Heart right ventricle (tissue), 16 donors: ENCODE measurements at regions of chr11 and their contacts with region 1.

Region 1: GRCh38 chr11:30855383-30856006 is 269.3 kb upstream of the MPPED2 start:
- DNase-seq: no peak
- ATAC-seq: peak in 1 of 8 donors; percentile 55
- H3K4me3 ChIP-seq: no peak overlapping the region
- H3K27ac ChIP-seq: no peak overlapping the region
- H3K4me1 ChIP-seq: peaks cover 0 to 4% (median 0%) of the 10 kb centered on the region in 9 donors
- H3K27me3 ChIP-seq: no peaks in the 10 kb centered on the region
- CTCF ChIP-seq: peak in 8 of 9 donors; percentile 33 to 77 (median 62)

Region 2: DNA sequence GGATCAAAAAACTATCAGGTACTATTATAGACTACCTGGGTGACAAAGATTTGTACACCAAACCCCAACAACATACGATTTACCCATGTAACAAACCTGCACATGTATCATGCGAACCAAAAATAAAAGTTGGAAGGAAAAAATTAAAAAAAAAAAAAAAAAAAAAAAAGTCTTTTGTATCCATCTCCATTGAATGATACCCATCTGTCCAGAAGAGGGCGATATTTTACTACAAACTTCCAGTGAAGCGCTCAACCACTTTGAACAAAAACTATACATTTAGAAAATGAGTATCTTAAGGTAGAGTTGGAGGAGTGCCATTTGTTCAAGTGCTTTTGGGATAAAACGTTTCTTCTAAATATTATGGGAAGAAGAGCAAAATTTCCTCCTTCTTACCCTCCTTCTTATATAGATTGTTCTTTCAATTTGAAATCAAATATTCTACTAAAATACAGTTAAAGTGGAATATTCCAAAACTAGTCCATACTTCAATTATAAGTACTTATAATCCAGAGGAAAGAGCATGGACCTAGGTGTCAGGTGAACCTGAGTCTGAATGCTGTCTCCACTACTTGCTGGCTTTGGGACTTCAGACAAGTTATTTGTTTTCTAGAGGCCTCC is 509.3 kb before region 1 on chr11:
- intact Hi-C with region 1: loop called in 9 of 10 experiments (anchors 1 to 5 kb)
- DNase-seq: peak in 1 of 2 donors; percentile 19
- ATAC-seq: peak in 5 of 8 donors; percentile 25 to 64 (median 62)
- H3K4me3 ChIP-seq: peak overlapping the region in 1 of 10 donors; percentile 13
- H3K27ac ChIP-seq: no peak overlapping the region
- H3K4me1 ChIP-seq: peaks cover 0 to 4% (median 0%) of the 10 kb centered on the region in 9 donors
- H3K27me3 ChIP-seq: no peaks in the 10 kb centered on the region
- CTCF ChIP-seq: peak; percentile 48 to 83 (median 67)

Region 3: DNA sequence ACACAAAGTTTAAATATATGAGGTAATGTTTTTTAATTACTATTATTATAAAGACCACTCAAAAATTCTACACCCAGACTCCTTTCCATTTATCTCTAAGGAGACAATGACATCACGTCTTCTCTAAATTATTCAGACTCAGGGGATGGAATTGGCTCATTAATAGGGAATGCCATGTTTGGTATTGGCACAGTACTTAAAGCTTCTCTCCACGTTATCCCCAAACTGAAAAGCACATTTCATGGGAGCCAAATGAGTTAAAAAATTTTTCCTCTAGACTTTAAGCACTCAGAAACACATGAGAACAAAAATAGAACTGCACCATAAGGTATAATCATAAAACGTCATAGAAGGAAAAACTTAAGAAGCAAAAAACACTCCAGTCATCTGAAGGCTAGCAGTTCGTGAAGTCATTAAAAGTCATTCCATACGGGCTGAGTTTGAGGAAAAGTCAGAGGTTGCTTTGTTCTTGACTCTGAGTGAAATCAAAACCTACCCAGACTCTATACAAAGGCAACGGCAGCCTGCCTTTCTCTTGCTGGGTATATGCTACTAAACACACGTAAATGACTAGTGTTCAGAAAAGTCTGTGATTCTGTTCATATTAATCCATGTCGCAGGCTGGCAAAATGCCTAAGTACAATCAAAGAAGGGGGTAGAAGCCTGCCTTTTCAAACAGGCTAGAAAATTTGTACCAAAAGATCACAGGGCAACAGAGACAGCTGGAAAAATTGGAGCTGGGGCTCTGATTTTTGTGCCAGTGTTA is 260.7 kb before region 1 on chr11:
- intact Hi-C with region 1: loop called in 1 of 10 experiments (anchors 10 kb)
- DNase-seq: no peak
- ATAC-seq: no peak
- H3K4me3 ChIP-seq: peak overlapping the region in 2 of 10 donors; percentile 8
- H3K27ac ChIP-seq: no peak overlapping the region
- H3K4me1 ChIP-seq: peaks cover 0 to 6% (median 0%) of the 10 kb centered on the region in 9 donors
- H3K27me3 ChIP-seq: no peaks in the 10 kb centered on the region
- CTCF ChIP-seq: no peak

Region 4: DNA sequence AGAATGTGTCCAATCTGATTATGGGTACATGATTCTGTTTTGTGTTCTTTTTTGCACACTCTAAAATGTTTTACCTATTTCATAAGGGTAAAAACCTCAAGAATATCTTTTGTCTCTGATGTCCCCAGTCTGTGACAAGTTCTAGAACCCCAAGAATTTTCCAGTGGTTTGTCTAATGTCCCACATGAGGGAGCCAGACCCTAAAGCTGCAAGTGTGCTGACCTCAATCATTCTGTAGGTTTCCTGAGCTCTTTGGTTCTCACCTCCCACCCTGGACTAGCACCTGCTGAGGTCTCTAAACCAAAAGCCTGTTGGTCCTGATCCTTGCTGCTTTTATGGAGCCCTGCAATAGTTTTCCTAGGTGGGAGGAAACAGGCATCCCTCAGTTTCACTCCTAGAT is 119.5 kb before region 1 on chr11:
- intact Hi-C with region 1: loop called in 1 of 10 experiments (anchors 5 kb)
- DNase-seq: no peak
- ATAC-seq: no peak
- H3K4me3 ChIP-seq: no peak overlapping the region
- H3K27ac ChIP-seq: no peak overlapping the region
- H3K4me1 ChIP-seq: no peaks in the 10 kb centered on the region
- H3K27me3 ChIP-seq: peaks cover 0 to 6% (median 0%) of the 10 kb centered on the region in 7 donors
- CTCF ChIP-seq: peak in 4 of 9 donors; percentile 8 to 37 (median 24)

Region 5: GRCh38 chr11:30889143-30889794 is 33.8 kb after region 1 on chr11:
- intact Hi-C with region 1: no loop called
- DNase-seq: no peak
- ATAC-seq: no peak
- H3K4me3 ChIP-seq: no peak overlapping the region
- H3K27ac ChIP-seq: no peak overlapping the region
- H3K4me1 ChIP-seq: no peaks in the 10 kb centered on the region
- H3K27me3 ChIP-seq: no peaks in the 10 kb centered on the region
- CTCF ChIP-seq: no peak

Region 6: DNA sequence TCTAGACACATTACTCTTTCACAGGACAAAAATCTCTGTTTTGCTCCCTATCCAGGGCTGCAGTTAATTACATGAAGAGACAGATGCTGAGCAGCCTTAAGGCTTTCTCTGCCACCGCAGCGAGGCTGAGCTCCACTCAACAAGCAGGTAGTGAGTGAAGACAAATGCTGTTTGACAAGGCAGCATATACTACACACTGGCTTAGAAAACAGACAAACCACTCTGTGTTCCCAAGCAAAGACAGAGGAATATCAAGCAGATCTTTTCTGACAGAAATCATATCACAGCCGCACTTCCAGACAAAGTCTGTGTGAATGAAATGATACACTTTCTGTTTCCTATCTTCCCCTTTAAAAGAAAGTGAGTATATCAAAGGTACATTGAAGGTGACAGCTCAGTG is 145.9 kb after region 1 on chr11:
- intact Hi-C with region 1: no loop called
- DNase-seq: no peak
- ATAC-seq: no peak
- H3K4me3 ChIP-seq: no peak overlapping the region
- H3K27ac ChIP-seq: no peak overlapping the region
- H3K4me1 ChIP-seq: no peaks in the 10 kb centered on the region
- H3K27me3 ChIP-seq: peaks cover 0 to 9% (median 0%) of the 10 kb centered on the region in 7 donors
- CTCF ChIP-seq: no peak